HEK293 (cell line): ENCODE measurements at regions of chr2 and their contacts with region 1.

Region 1: DNA sequence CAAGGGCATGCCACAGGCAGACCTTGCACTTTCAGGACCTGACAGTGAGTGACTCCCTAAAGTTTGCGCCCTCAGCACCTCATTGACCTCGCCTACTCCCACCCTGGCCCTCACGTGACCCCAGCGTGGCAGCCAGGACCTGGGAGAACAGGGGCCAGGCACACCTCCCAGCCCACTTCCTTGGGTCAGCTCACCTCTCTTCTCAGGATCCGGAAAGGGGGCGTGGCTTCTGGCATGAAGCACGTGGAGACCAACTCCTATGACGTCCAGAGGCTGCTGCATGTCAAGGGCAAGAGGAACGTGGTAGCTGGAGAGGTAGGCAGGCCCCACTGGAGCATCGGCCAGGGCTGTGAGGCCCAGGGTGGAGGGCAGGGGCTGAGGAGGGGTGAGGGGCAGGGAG is 8.8 kb downstream of the VIL1 start:
- H3K4me3 ChIP-seq: no peak overlapping the region
- H3K27ac ChIP-seq: no peak overlapping the region
- H3K4me1 ChIP-seq: no peaks in the 10 kb centered on the region
- CTCF ChIP-seq: no peak

Region 2: DNA sequence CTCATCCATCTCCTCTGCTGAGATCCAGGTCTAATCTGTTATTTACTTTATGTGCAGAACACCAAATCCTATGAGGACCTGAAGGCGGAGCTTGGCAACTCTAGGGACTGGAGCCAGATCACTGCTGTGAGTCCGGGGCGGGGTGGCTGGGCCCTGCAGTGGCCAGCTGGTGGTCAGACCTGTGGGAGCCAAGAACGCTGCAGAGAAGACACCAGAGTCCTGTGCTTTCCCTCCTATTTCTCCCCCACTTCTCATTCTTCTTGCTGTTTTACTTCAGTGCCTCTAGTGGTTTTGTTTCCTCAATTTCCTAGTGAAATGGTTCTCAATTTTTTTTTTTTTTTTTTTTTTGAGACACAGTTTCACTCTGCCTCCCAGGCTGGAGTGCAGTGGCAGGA is 10.8 kb after region 1 on chr2:
- CTCF ChIA-PET with region 1: no interaction called
- POLR2A ChIA-PET with region 1: interaction called, 10 read pairs
- H3K4me3 ChIP-seq: no peak overlapping the region
- H3K27ac ChIP-seq: no peak overlapping the region
- H3K4me1 ChIP-seq: no peaks in the 10 kb centered on the region
- CTCF ChIP-seq: no peak